Posterior vena cava (tissue), 2 donors: ENCODE measurements at regions of chr6 and their contacts with region 1.

Region 1: DNA sequence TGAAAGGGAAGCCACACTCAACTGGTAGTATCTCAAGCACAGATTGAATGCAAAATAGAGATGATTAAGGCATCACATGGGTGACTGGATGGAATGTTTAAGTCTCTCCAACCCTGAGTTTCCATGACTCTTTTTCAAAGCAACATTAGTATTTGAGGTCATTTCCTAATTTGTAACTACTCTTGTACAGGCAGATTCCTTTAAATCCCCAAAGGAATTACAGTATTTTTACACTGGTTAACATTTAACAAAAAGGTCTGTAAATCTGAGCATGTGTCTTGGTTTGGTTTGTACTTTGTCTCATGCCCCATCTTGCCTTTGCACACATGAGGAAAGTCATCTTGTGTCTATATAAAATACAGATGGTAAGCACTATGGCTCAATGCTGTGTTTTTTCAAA is 15.1 kb downstream of the RMND1 start:
- DNase-seq: no peak

Region 2: GRCh38 chr6:150606168-150606591 is 830.6 kb before region 1 on chr6:
- intact Hi-C with region 1: no loop called
- DNase-seq: no peak

Region 3: DNA sequence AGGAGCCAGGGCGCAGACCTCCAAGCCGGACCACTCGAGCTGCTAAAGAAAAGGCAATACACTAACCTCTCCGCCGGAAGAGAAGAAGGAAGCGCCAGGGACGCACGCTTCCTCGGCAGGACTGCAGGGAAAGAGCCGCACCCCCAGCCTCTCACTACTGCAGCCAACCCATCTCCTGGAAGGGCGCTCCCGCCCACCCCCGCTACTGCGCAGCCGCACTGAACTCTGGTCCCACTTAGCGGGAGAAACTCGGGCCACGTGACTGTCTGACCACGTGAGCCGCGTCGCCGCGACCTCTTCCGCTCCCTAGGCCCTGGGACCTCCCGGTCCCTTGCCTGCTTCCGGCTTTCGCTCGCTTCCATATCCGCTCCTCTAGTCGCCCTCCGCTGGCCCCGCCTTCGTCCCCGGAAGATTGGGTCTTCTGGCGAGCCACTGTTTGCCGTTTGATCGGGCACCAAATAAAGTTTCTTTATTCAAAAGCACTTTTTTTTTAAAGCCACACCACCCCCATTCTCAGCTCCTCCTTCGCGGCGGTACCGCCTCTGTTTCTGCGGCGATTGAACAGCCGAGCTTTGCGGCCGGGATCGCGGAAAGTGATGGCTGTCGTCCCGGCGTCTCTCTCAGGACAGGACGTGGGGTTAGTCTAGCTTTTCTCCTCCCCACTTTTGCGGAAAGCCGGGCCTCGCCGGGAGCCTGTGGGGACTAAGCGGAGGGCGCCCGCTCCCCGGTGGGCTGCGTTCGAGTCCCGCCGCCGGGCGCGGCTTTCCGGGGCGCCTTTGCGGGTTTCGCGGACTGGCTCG is 15.3 kb after region 1 on chr6 and contains the start of gene RMND1:
- intact Hi-C with region 1: loop called in 1 of 2 experiments (anchors 1 kb)
- DNase-seq: peak; percentile 100
- total RNA-seq, gene RMND1: 13.8 to 16.2 TPM

Region 4: DNA sequence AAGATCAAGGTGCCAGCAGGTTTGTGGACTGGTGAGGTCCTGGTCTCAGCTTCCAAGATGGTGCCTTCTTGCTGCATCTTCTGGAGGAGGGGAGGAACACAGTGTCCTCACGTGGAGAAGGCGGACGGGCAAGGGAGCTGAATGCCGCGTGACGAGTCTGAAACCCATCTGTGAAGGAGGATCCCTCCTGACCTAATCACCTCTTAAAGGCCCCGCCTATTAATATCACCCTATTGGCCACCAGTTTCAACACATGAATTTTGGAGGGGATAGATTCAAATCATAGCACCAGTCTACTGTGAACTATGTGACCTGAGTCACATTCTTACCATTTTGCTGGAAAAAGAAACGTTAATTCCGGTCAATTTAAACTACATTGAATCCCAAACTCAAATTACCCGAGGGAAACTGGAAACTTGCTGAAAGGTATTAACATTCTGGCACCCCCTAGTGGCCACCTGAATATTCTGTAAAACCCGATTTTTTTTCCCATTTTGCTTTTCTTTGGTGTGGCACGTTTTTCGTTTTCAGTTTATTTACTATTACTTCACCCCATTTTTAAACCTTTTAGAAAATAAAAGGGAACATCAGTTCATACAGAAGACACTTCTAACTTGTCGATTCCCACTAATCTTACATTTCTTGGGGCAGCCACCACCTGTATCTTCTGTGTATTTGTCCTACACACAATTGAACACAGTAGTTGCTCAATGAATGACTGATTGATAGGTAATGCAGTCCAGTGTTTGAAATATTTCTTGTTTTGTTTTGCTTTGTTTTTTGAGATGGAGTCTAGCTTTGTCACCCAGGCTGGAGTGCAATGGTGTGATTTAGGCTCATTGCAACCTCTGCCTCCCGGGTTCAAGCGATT is 39.1 kb after region 1 on chr6:
- intact Hi-C with region 1: loop called in 1 of 2 experiments (anchors 5 kb)
- DNase-seq: no peak

Region 5: DNA sequence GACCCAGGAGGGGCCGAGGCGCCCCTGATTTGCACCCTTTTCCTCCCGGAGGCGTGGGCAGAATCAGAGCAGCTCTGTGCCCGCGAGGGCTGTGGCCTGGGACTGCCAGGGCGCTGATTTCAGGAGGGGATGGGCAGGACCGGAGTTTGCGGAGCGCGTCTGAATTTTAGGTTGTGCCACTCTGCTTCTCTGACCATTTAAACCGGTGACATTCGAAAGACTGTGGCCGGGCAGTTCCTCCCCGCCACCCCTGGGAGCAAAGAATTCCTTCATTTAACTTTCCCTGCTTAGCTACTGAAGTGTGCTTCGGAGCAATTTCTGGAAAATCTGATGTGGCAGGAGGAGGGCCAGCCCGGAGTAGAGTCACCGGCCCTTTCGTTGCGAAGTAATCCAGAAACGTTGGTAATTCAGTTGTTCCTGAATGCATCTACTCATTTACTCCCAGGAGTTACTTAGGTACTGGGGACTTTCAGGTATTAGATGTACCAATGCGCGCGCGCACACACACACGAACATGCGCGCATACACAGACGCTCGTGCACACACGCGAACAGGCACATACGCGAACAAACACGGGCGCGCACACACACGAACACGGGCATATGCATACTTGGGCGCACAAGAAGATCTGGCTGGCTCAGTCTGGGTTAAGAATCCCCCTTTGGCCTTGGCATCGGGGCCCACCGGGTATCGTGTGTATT is 57.6 kb after region 1 on chr6:
- intact Hi-C with region 1: no loop called
- DNase-seq: peak; percentile 87

Region 6: GRCh38 chr6:151608435-151608834 is 171.6 kb after region 1 on chr6:
- intact Hi-C with region 1: no loop called
- DNase-seq: no peak

Region 7: GRCh38 chr6:153340568-153340967 is 1903.8 kb after region 1 on chr6:
- intact Hi-C with region 1: no loop called
- DNase-seq: no peak